ENCODE measurements at regions of chr13 and their contacts with region 1.

Region 1: GRCh38 chr13:31909864-31910551 is 121.6 kb upstream of the FRY start:
- DNase-seq: peak; percentile 49 to 68 (median 60)
- H3K4me3 ChIP-seq: no peak overlapping the region
- H3K4me3 Mint-ChIP-seq: no peak overlapping the region
- H3K27ac ChIP-seq: no peak overlapping the region
- H3K27ac Mint-ChIP-seq: no peak overlapping the region
- H3K4me1 ChIP-seq: peaks cover 20% of the 10 kb centered on the region
- H3K4me1 Mint-ChIP-seq: peaks cover 8 to 43% (median 21%) of the 10 kb centered on the region in 4 donors
- H3K27me3 ChIP-seq: no peaks in the 10 kb centered on the region
- H3K27me3 Mint-ChIP-seq: peaks cover 0 to 2% of the 10 kb centered on the region in 2 donors

Region 2: DNA sequence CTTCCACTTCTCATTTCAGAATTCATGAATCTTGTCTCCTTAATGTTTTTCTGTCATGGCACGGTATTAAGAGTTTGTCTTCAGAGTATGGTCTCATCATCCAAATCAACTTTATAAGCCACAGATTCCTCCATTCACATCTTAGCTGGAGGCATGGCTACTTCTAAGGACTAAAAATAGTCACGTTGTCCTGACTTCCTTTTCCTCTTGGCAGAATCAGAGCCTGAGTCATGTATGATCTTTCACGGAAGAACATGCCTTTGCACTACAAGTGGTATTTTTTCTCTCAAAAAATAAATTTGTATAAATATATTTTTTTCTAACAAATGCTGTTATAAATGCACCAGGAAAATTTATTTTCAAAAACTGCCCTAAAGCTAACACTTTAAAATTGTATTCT is 1103.2 kb before region 1 on chr13:
- CTCF ChIA-PET with region 1: no interaction called
- POLR2A ChIA-PET with region 1: no interaction called
- intact Hi-C with region 1: no loop called
- DNase-seq: no peak
- H3K4me3 ChIP-seq: no peak overlapping the region
- H3K4me3 Mint-ChIP-seq: no peak overlapping the region
- H3K27ac ChIP-seq: no peak overlapping the region
- H3K27ac Mint-ChIP-seq: no peak overlapping the region
- H3K4me1 ChIP-seq: peaks cover 9% of the 10 kb centered on the region
- H3K4me1 Mint-ChIP-seq: peaks cover 4 to 14% (median 6%) of the 10 kb centered on the region in 4 donors
- H3K27me3 ChIP-seq: no peaks in the 10 kb centered on the region
- H3K27me3 Mint-ChIP-seq: no peaks in the 10 kb centered on the region

Region 3: DNA sequence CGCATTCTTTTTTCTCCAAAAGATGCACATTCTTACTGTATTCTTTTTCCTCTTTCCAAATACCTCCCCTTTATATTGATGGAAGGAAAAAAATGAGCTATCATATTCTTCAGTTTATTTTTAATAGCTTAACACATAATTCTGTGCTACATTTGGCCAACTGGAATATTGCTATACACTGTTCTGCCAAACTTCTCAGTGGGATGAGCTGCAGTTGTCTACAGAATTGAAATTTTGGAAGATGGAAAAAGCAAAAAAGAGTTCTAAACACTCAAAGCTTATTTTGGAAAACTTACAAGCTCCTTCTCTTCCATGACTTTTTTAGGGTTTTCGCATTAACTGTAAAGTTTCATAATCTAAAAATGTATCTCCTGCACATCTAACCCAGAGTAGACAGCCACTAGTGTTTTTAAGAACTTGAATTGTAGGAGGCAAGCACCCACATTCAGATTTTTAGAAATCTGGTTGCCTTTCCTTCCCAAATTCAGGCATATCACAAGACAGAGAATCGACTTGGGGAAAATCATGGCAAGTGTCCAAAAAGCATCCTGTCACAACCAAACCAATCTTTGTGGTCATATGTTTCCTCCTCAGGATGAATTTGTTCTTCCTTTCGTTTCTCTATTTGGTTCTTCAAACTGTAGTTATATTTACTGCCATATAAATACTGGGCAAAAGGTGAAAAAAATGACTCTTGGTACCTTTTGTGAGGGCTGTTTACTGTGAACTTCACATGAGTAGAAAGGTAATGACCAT is 10.1 kb after region 1 on chr13:
- CTCF ChIA-PET with region 1: interaction called, 49 read pairs
- POLR2A ChIA-PET with region 1: no interaction called
- intact Hi-C with region 1: no loop called
- DNase-seq: no peak
- H3K4me3 ChIP-seq: no peak overlapping the region
- H3K4me3 Mint-ChIP-seq: peak overlapping the region in 1 of 8 donors; percentile 8
- H3K27ac ChIP-seq: no peak overlapping the region
- H3K27ac Mint-ChIP-seq: peak overlapping the region in 5 of 7 donors; percentile 12 to 37 (median 21)
- H3K4me1 ChIP-seq: no peaks in the 10 kb centered on the region
- H3K4me1 Mint-ChIP-seq: peaks cover 7 to 34% (median 19%) of the 10 kb centered on the region in 4 donors
- H3K27me3 ChIP-seq: no peaks in the 10 kb centered on the region
- H3K27me3 Mint-ChIP-seq: no peaks in the 10 kb centered on the region

Region 4: DNA sequence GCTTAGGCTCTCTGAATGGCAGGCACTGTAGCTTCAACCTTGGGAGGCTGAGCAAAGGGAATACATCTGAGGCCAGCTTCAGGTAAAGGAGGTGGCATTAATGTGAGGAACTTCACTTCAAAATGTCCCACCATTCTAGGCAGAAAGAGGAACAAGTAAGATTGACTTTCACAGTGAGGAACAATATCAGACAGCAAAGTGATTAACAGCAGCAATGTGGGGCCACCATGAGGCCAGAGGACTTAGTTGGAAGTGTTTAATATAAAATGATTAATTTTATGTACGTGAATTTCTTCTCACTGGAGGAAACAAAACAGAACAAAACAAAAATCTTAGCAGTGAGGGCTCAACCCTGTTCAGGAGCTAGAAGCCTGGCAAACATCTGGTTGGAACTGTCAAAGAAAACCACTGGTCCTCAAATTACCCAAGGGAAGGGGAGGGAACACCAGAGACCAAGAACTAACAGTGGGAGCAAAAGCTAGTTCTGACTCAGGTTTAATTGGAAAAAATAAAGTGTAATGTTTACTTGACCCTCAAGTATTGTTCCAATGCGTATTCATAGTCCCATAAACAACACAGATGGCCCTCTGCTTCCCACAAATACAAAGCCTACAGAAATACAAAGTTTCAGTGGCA is 77.6 kb after region 1 on chr13:
- CTCF ChIA-PET with region 1: interaction called, 11 read pairs
- POLR2A ChIA-PET with region 1: no interaction called
- intact Hi-C with region 1: no loop called
- DNase-seq: no peak
- H3K4me3 ChIP-seq: no peak overlapping the region
- H3K4me3 Mint-ChIP-seq: no peak overlapping the region
- H3K27ac ChIP-seq: no peak overlapping the region
- H3K27ac Mint-ChIP-seq: peak overlapping the region in 2 of 7 donors; percentile 1 to 24
- H3K4me1 ChIP-seq: no peaks in the 10 kb centered on the region
- H3K4me1 Mint-ChIP-seq: peaks cover 0 to 6% (median under 1%) of the 10 kb centered on the region in 4 donors
- H3K27me3 ChIP-seq: no peaks in the 10 kb centered on the region
- H3K27me3 Mint-ChIP-seq: peaks cover 0 to 2% of the 10 kb centered on the region in 2 donors

Region 5: DNA sequence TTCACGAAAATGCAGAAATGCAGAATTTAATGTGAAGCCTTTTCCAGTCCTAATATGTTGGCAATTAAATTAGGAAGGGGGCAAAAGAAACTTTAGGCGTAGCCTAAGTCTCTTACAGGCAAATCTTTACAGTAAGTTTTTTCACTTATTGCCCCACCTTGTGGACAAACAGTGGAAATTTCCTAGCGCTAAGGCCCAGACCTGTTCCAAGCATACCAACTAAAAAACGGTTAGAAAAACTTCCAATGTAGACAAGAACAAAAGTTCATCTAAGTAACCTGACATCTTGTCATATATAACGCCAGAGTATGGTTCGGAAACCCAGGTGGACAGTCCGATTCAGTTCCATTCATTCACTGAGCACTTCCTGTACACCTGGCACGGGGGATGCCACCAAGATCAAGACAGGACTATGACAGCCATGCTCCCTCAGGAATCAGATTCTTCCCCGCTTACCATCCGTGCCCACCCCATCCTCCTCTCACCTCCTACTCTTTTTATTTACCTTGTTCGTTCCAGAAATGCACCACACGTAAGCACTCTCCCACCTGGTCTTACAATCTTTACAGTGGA is 400.2 kb after region 1 on chr13:
- CTCF ChIA-PET with region 1: interaction called, 19 read pairs
- POLR2A ChIA-PET with region 1: interaction called, 3 read pairs
- intact Hi-C with region 1: loop called (anchors 1 kb)
- DNase-seq: peak; percentile 41 to 57 (median 49)
- H3K4me3 ChIP-seq: no peak overlapping the region
- H3K4me3 Mint-ChIP-seq: peak overlapping the region in 4 of 8 donors; percentile 12 to 66 (median 42)
- H3K27ac ChIP-seq: no peak overlapping the region
- H3K27ac Mint-ChIP-seq: peak overlapping the region in 1 of 7 donors; percentile 49
- H3K4me1 ChIP-seq: peaks cover 15% of the 10 kb centered on the region
- H3K4me1 Mint-ChIP-seq: peaks cover 13 to 26% (median 16%) of the 10 kb centered on the region in 4 donors
- H3K27me3 ChIP-seq: no peaks in the 10 kb centered on the region
- H3K27me3 Mint-ChIP-seq: no peaks in the 10 kb centered on the region

Region 6: GRCh38 chr13:32443111-32443510 is 533.1 kb after region 1 on chr13:
- CTCF ChIA-PET with region 1: interaction called, 4 read pairs
- POLR2A ChIA-PET with region 1: no interaction called
- intact Hi-C with region 1: loop called (anchors 1 kb)
- DNase-seq: peak; percentile 33 to 45 (median 41)
- H3K4me3 ChIP-seq: no peak overlapping the region
- H3K4me3 Mint-ChIP-seq: no peak overlapping the region
- H3K27ac ChIP-seq: no peak overlapping the region
- H3K27ac Mint-ChIP-seq: peak overlapping the region in 4 of 7 donors; percentile 0 to 54 (median 28)
- H3K4me1 ChIP-seq: no peaks in the 10 kb centered on the region
- H3K4me1 Mint-ChIP-seq: peaks cover 1 to 4% (median 3%) of the 10 kb centered on the region in 4 donors
- H3K27me3 ChIP-seq: no peaks in the 10 kb centered on the region
- H3K27me3 Mint-ChIP-seq: no peaks in the 10 kb centered on the region

Region 7: DNA sequence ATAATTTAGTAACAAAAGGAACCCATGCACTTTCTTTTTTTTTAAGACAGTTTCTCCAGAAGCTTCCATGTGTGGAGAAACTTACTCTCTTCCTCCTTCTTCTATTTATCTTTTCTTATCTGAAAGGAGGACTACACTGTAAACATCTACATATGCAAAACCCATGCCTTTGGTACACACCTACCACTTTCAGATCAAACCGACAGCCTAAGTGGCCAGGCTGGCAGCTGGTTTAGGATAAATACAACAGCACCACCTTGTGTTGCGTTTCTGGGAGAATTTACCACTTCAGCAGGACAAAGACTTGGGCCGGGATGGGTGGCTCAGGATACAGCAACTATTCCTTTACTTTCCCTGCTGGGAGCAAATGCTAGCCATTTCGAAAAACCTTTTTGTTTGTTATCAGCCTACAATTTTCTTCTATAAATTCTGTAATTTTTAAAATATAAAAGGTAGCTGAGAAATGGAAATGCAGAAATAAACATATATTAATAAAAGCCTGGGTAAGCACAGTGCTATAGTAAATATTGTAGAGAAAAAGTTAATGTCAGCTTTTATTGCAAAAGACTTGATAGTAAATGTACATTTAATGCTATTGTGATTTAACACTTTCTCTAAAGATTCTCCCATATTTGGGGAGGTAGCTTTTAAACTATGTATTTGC is 1813.9 kb after region 1 on chr13:
- CTCF ChIA-PET with region 1: no interaction called
- POLR2A ChIA-PET with region 1: no interaction called
- intact Hi-C with region 1: loop called (anchors 10 kb)
- DNase-seq: peak; percentile 63 to 74 (median 72)
- H3K4me3 ChIP-seq: no peak overlapping the region
- H3K4me3 Mint-ChIP-seq: peak overlapping the region in 6 of 8 donors; percentile 17 to 70 (median 54)
- H3K27ac ChIP-seq: no peak overlapping the region
- H3K27ac Mint-ChIP-seq: peak overlapping the region in 6 of 7 donors; percentile 49 to 81 (median 64)
- H3K4me1 ChIP-seq: peaks cover 23% of the 10 kb centered on the region
- H3K4me1 Mint-ChIP-seq: peaks cover 10 to 23% (median 20%) of the 10 kb centered on the region in 4 donors
- H3K27me3 ChIP-seq: no peaks in the 10 kb centered on the region
- H3K27me3 Mint-ChIP-seq: no peaks in the 10 kb centered on the region

Measured in CD4-positive, alpha-beta memory T cell (primary cell).